ENCODE measurements at regions of chr11 and their contacts with region 1.

Region 1: DNA sequence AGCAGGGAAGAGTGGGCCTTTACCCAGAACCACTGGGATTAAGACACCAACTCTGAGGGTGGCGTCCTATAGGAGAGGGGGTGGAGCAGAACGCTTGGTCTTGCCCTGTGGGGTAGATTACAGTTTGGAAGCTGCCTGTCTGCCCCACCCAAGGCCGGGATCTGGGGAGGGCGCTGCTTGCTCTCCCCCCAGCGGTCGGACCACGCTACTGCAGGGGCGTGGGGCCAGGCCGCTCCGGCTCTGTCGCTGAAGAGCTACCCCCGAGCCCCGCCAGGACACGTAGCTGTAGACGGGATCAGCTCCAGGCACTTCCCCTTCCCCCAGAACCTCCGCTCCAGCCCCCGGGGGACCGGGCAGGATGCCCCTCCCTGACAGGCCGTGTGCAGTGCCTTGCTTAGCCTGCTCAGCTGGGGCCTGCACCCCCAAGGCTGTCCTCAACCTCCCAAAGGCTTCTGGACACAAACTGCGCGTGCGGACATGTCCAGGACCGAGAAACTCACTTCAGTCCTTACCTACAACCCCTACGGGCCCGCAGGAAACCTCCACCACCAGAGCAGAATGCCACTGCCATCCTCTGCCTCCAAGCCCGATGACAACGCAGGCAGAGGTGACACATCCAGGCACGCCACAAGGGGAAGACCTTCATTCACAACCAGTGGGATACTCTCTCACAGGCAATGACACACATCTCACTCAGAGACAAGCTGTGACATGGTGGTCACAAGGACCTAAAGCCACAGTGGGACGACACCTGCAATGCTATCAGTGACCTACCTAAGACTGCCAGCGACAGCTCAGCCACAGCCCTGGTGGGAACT is 3.6 kb downstream of the AHNAK start:
- DNase-seq: peak; percentile 91
- ATAC-seq: peak; percentile 67

Region 2: DNA sequence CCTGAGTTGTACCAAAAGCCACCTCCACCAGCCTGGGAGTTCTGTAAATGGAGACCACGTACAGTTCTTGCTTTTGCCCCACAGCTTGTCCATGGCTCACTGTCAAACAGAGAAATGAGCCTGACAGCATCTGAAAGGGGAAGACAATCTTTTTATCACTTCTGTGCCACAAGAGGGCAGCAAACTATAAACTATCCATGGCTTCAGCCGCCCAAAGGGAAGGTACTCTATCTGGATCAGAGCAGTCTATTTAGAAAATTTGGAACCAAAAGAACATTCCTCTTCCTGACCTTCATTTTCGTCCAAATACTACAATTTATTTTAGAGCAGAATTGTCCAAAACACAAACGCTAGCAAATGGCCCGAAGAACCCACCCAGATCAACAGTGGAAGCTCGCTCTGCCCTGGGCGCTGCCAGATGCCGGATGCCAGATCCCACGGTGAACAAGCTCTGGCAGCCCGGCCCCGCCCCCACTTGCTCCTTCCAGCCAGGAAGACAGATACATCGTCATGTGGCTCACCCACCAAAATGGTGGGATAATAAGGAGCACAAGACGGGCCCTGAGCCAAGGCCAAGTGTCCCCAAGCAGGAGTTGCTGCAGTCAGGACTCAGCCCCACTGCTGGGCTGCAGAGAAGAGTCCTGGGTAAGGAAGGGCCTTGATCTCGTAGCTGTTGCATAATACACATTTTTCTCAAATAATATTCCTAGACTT is 148.0 kb before region 1 on chr11:
- intact Hi-C with region 1: loop called (anchors 10 kb)
- DNase-seq: peak; percentile 89
- ATAC-seq: peak; percentile 84

Region 3: GRCh38 chr11:62427630-62428233 is 115.2 kb before region 1 on chr11:
- intact Hi-C with region 1: loop called (anchors 5 kb)
- DNase-seq: no peak
- ATAC-seq: no peak

Region 4: GRCh38 chr11:62645956-62646824 is 103.2 kb after region 1 on chr11 and contains the start of gene GANAB:
- intact Hi-C with region 1: no loop called
- DNase-seq: peak; percentile 100
- ATAC-seq: peak; percentile 99
- total RNA-seq, gene GANAB: 219 TPM